ENCODE measurements at regions of chr3 and their contacts with region 1.

Region 1: GRCh38 chr3:141738022-141738890 is at the start of gene RNF7:
- DNase-seq: peak; percentile 88 to 99 (median 93)

Region 2: DNA sequence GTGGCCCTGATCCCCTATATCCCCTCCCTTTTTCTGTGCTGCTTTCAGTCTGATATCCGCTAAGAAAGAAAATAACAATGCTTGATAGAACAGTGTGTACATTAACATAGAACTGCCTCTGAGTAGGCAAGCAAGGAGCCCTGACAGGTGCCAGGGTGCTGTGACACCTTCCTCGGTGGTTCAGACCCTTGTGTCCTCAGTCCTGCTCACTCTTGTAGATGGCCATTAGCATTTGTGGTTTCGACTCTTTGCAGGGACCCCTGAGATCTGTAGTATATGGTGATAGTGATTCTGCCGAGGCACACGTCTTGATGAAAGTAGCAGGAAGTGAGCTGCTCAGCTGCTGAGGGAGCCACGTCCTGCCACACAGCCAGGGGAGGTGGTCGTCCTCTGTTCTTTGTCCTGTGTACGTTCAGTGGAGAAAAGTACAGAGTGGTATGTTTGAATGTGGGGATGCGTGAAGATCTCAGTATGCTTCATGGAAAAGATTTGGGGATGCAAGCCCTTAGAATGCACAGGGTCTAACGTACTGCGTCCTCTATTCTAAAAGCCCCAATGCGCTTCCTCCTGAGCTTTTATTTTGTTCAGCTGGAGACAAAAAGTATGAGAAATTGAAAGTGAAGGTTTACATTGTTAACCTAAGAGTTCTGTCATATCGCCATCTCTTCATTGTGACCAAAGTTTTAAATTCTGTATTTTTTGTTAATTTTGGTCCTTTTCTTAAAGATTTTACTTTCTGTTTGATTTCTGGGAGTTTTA is 471.3 kb before region 1 on chr3:
- intact Hi-C with region 1: no loop called
- DNase-seq: no peak

Region 3: DNA sequence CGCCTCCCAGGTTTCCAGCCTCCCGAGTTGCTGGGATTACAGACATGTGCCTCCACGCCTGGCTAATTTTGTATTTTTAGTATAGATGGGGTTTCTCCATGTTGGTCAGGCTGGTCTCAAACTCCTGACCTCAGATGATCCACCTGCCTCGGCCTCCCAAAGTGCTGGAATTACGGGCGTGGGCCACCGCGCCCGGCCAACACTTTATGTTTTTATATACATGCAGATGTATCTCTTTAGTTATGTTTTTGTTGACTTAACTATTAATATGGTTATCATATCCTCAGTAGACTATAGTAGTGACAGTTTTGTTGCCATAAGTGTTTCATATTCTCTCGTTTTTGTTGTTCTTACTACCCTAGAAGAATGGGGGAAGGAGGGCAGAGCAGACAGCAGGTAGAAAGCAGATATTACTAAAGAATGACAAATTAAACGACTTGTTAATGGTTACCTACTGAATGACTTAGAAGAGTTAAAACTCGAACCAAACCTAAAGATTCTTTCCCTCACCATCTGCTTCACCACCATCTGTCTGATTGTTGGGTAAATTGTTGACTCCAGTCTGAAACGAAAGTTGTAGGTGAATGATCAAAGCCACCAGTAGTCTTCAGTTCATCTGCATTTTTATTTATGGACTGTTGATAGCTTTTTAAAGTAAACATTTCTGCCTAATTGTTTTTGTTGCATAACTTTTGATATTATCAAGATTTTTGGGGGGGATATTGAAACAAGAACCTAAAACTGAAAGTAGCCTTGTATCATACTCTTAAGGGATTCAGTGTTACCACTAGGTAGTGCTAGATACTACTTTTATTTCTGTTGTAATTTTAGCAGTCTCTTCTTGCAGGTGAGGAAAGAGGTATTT is 162.1 kb before region 1 on chr3:
- intact Hi-C with region 1: loop called (anchors 10 kb)
- DNase-seq: peak in 1 of 10 donors; percentile 39

Region 4: GRCh38 chr3:141875374-141875892 is 137.2 kb after region 1 on chr3:
- intact Hi-C with region 1: loop called (anchors 1 kb)
- DNase-seq: peak; percentile 71 to 97 (median 86)

Region 5: GRCh38 chr3:141998669-141999290 is 260.5 kb after region 1 on chr3:
- intact Hi-C with region 1: loop called (anchors 10 kb)
- DNase-seq: no peak

Region 6: GRCh38 chr3:142028243-142028777 is 290.1 kb after region 1 on chr3:
- intact Hi-C with region 1: no loop called
- DNase-seq: no peak

Region 7: GRCh38 chr3:142226484-142226883 is 488.2 kb after region 1 on chr3:
- intact Hi-C with region 1: loop called (anchors 5 kb)
- DNase-seq: no peak

Region 8: GRCh38 chr3:142279965-142280590 is 541.8 kb after region 1 on chr3:
- intact Hi-C with region 1: loop called (anchors 5 kb)
- DNase-seq: peak in 1 of 10 donors; percentile 39